ENCODE measurements at regions of chrX and their contacts with region 1.

Region 1: GRCh38 chrX:69222103-69223090 is 57.1 kb upstream of the PJA1 start:
- DNase-seq: peak; percentile 18
- ATAC-seq: peak; percentile 93
- H3K4me3 ChIP-seq: no peak overlapping the region
- H3K27ac ChIP-seq: no peak overlapping the region
- H3K4me1 ChIP-seq: no peaks in the 10 kb centered on the region
- H3K27me3 ChIP-seq: no peaks in the 10 kb centered on the region
- CTCF ChIP-seq: peak; percentile 83

Region 2: GRCh38 chrX:69285881-69286564 is 63.6 kb after region 1 on chrX:
- CTCF ChIA-PET with region 1: no interaction called
- POLR2A ChIA-PET with region 1: no interaction called
- in situ Hi-C with region 1: no loop called
- intact Hi-C with region 1: loop called (anchors 10 kb)
- DNase-seq: no peak
- ATAC-seq: peak; percentile 89
- H3K4me3 ChIP-seq: peak overlapping the region; percentile 24 to 47
- H3K27ac ChIP-seq: no peak overlapping the region
- H3K4me1 ChIP-seq: no peaks in the 10 kb centered on the region; the same call in 1 of the 2 replicates
- H3K27me3 ChIP-seq: no peaks in the 10 kb centered on the region
- CTCF ChIP-seq: peak; percentile 94

Region 3: DNA sequence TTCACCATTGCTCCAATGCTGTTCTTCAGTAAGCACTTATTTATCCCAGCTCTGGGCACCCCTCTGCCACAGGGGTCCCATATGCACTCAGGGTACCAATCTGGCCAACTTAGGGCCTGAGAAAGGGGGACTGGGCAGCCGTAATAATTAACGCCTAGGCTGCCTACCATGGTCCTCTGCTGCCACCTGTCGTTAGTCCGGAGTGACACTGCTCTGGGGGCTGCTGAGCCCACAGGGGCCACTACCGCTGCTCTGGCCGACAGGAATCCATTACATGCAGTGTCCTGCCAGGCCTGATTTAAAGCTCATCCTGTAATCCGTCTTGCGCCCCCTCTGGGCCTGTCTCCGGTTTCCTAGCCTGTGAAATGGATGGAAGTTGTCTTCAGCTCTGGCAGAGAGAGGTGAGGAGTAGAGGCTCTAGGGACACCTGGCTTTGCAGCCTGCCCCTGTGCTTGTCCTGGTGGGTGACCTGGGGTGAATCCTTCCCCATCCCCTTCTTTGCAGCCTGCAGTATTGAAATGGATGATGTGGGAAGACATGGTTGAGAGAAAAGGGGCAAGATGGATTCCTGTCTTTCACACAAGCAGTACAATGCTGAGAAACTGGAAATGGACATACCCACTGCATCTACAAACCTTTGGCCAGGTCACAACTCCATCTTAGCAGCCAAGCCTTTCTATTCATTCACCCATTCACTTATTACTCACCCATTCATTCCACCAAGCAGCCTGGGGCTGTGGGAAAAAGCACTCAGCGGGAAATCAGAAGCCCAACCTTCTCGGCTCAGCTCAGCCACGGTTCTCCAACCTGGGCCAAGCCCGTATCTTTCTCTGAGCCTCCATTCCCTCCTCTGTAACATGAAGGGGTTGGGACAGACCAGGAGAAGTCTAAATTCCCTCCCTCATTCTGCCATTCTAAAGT is 165.4 kb after region 1 on chrX:
- CTCF ChIA-PET with region 1: no interaction called
- POLR2A ChIA-PET with region 1: no interaction called
- in situ Hi-C with region 1: no loop called
- intact Hi-C with region 1: loop called (anchors 5 kb)
- DNase-seq: no peak
- ATAC-seq: peak; percentile 89
- H3K4me3 ChIP-seq: no peak overlapping the region
- H3K27ac ChIP-seq: no peak overlapping the region
- H3K4me1 ChIP-seq: no peaks in the 10 kb centered on the region; the same call in 1 of the 2 replicates
- H3K27me3 ChIP-seq: peaks cover 3% of the 10 kb centered on the region; the same call in 1 of the 2 replicates
- CTCF ChIP-seq: peak; percentile 86